PC-9 (cell line): ENCODE measurements at regions of chr11 and their contacts with region 1.

Region 1: GRCh38 chr11:99795999-99796398 is 775.2 kb downstream of the CNTN5 start:
- DNase-seq: no peak
- H3K4me3 ChIP-seq: no peak overlapping the region
- H3K27ac ChIP-seq: no peak overlapping the region
- H3K4me1 ChIP-seq: no peaks in the 10 kb centered on the region
- H3K27me3 ChIP-seq: no peaks in the 10 kb centered on the region
- CTCF ChIP-seq: no peak

Region 2: DNA sequence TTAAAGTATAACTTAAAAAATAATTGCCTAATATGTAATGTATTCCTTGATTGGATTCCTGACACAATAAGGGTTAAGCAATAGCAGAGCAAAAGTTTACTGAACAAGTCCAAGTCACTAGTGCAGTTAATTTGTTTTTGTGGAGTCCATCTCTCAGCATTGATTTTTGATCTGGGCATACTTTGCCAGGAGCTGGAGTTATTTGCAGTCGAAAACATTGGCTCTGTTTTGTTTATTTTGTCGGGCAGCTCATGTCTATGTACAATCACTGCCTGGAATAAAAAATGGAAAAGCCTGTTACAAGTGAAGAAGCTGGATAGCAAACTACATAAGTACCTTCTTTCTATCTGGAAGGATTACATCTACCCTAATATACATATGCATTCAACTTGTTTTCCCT is 150.1 kb before region 1 on chr11:
- CTCF ChIA-PET with region 1: no interaction called
- POLR2A ChIA-PET with region 1: no interaction called
- intact Hi-C with region 1: no loop called
- DNase-seq: no peak
- H3K4me3 ChIP-seq: no peak overlapping the region
- H3K27ac ChIP-seq: no peak overlapping the region
- H3K4me1 ChIP-seq: no peaks in the 10 kb centered on the region
- H3K27me3 ChIP-seq: no peaks in the 10 kb centered on the region
- CTCF ChIP-seq: no peak

Region 3: GRCh38 chr11:99773646-99774045 is 22.4 kb before region 1 on chr11:
- CTCF ChIA-PET with region 1: no interaction called
- POLR2A ChIA-PET with region 1: no interaction called
- intact Hi-C with region 1: loop called (anchors 1 kb)
- DNase-seq: no peak
- H3K4me3 ChIP-seq: no peak overlapping the region
- H3K27ac ChIP-seq: no peak overlapping the region
- H3K4me1 ChIP-seq: no peaks in the 10 kb centered on the region
- H3K27me3 ChIP-seq: no peaks in the 10 kb centered on the region
- CTCF ChIP-seq: no peak

Region 4: DNA sequence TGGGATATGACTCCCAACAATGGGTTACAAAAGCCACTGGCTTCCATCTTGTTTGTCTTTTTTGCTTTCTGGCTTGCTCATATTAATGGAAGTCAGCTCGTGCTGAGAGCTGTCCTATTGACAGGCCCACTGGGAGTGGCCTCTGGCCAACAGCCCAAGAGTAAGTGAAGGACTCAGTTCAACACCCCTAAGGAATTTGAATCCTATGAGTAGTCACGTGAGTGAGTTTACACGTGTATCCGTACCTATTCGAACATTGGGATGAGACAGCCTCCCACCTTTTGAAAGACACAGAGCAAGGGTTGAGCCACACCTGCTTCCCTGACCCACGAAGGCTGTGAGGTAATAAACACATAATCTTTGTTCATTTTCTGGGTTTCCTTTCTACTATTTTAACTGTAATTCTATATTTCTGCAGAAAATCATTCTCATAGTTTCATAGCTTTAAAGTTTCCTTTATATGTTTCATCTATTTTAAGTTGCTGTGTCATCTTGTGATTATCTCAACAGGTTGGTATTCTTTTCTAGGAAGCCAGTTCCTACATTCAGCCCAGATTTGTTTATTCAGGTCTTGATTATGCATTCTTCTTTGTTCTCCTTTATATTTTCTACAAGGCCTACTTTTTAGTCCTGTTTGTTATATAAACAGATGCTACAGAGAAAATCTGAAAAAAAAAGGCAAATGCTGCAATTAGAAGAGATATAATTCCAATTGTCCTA is 27.0 kb after region 1 on chr11:
- CTCF ChIA-PET with region 1: no interaction called
- POLR2A ChIA-PET with region 1: no interaction called
- intact Hi-C with region 1: no loop called
- DNase-seq: no peak
- H3K4me3 ChIP-seq: no peak overlapping the region
- H3K27ac ChIP-seq: no peak overlapping the region
- H3K4me1 ChIP-seq: no peaks in the 10 kb centered on the region
- H3K27me3 ChIP-seq: no peaks in the 10 kb centered on the region
- CTCF ChIP-seq: no peak